ENCODE measurements at regions of chr1 and their contacts with region 1.

Region 1: GRCh38 chr1:204941421-204942338 is 71.0 kb downstream of the NFASC start:
- DNase-seq: peak; percentile 73
- H3K4me3 Mint-ChIP-seq: no peak overlapping the region
- H3K27ac Mint-ChIP-seq: no peak overlapping the region
- H3K4me1 Mint-ChIP-seq: no peaks in the 10 kb centered on the region
- H3K27me3 Mint-ChIP-seq: peaks cover 9% of the 10 kb centered on the region

Region 2: GRCh38 chr1:204828338-204828850 is 113.3 kb before region 1 on chr1:
- CTCF ChIA-PET with region 1: interaction called, 3 read pairs
- POLR2A ChIA-PET with region 1: no interaction called
- intact Hi-C with region 1: loop called (anchors 5 kb)
- DNase-seq: peak; percentile 69
- H3K4me3 Mint-ChIP-seq: no peak overlapping the region
- H3K27ac Mint-ChIP-seq: no peak overlapping the region
- H3K4me1 Mint-ChIP-seq: peaks cover 4% of the 10 kb centered on the region
- H3K27me3 Mint-ChIP-seq: peaks cover 52% of the 10 kb centered on the region

Region 3: DNA sequence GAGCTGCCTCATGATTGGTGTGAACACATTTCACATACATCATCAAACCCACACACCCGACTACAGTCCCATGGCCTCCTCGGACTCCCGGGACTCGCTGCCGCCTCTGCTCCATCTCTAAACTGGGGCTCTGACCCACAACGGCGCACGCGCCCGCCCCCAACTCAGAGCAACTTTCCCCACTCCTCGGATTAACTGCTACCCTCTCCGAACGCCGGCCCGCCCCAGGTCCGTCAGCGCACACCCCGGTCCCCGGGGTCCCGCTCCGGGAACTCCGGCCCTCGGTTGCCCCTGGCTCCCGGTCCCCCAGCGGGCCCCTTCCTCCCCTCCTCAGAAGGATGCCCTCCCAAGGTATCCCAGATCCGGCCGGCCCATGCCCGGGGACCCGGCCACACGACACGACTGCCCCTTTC is 269.1 kb after region 1 on chr1:
- CTCF ChIA-PET with region 1: no interaction called
- POLR2A ChIA-PET with region 1: no interaction called
- intact Hi-C with region 1: no loop called
- DNase-seq: peak; percentile 40
- H3K4me3 Mint-ChIP-seq: peak overlapping the region; percentile 92
- H3K27ac Mint-ChIP-seq: peak overlapping the region; percentile 91
- H3K4me1 Mint-ChIP-seq: peaks cover 48% of the 10 kb centered on the region
- H3K27me3 Mint-ChIP-seq: no peaks in the 10 kb centered on the region